ENCODE measurements at regions of chr1 and their contacts with region 1.

Region 1: GRCh38 chr1:167258858-167259257 is 38.2 kb downstream of the POU2F1 start:
- DNase-seq: no peak
- H3K4me3 Mint-ChIP-seq: no peak overlapping the region
- H3K27ac Mint-ChIP-seq: no peak overlapping the region
- H3K4me1 Mint-ChIP-seq: no peaks in the 10 kb centered on the region
- H3K27me3 Mint-ChIP-seq: no peaks in the 10 kb centered on the region
- CTCF ChIP-seq: no peak

Region 2: GRCh38 chr1:167273027-167273800 is 14.4 kb after region 1 on chr1:
- CTCF ChIA-PET with region 1: interaction called, 39 read pairs
- POLR2A ChIA-PET with region 1: no interaction called
- intact Hi-C with region 1: no loop called
- DNase-seq: peak; percentile 86
- H3K4me3 Mint-ChIP-seq: no peak overlapping the region
- H3K27ac Mint-ChIP-seq: peak overlapping the region; percentile 23
- H3K4me1 Mint-ChIP-seq: peaks cover 42% of the 10 kb centered on the region
- H3K27me3 Mint-ChIP-seq: no peaks in the 10 kb centered on the region
- CTCF ChIP-seq: no peak

Region 3: DNA sequence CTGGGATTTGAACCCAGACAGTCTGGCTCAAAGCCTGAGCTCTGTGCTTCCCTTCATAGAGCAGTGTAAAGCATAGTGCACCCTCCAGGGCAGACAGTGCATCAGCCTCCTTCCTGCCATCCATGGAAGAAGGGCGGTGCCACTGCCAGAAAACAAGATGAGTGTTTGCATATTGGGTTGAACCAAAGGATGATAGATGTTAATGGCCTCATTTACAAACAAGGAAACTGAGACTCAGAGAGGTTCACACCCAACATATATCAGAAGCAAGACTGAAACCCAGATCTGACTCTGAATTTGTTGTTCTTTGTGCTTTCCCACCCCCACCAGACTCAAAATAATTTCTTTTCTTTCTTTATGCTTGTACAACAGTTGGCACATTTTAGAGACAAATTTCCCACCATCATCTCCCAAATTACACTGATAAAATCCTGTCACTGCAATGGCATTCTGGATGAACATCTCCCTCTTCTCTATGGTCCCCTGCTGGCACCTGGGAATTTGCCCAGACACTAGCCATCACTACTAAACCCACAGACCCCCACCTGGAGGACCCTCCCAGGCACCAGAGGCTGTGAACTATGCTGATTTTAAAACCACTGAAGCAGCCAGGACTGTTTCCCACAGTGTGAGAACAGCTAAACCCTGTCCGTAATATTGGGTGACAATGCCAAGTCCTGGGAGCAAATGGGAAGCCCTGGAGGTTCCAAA is 417.5 kb after region 1 on chr1:
- CTCF ChIA-PET with region 1: no interaction called
- POLR2A ChIA-PET with region 1: no interaction called
- intact Hi-C with region 1: no loop called
- DNase-seq: no peak
- H3K4me3 Mint-ChIP-seq: no peak overlapping the region
- H3K27ac Mint-ChIP-seq: no peak overlapping the region
- H3K4me1 Mint-ChIP-seq: peaks cover 12% of the 10 kb centered on the region
- H3K27me3 Mint-ChIP-seq: no peaks in the 10 kb centered on the region
- CTCF ChIP-seq: no peak